ENCODE measurements at regions of chr4 and their contacts with region 1.

Region 1: DNA sequence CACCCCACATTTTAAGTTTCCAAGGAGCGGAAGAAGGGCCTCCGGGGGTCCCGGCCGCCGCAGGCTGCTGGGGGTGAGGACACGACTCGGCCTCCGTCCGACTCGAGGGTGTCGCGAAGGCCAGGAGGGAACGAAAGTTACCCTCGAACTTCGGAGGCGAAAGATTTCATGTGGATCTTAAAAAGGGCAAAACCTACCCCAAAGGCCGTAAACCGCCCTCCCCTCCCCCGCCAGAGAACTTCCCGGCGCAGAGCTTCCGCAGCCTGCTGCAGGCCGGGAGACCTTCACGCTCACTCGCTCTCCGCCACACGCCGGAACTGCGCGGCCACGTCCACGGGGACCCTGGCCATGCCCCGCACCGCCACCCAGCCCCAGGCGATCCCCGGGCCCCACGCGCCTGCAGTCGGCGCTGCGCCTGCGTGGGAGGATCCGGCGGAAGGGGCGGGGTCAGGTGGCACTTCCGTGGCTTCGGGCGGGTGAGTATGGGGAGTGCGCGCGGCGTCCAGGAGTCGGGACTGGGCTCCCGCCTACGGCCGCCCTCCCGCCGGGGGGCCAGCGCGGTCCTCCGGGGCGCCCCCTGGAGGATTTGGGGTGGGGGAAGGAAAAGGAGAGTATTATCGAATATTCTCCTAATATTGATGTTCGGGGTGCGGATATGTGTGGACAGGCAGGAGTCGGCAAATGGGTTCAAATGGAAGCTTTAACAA is at the start of gene MMAA:
- DNase-seq: peak; percentile 41
- H3K4me3 ChIP-seq: peak within 1 kb of the TSS; percentile 83
- CTCF ChIP-seq: peak; percentile 54

Region 2: DNA sequence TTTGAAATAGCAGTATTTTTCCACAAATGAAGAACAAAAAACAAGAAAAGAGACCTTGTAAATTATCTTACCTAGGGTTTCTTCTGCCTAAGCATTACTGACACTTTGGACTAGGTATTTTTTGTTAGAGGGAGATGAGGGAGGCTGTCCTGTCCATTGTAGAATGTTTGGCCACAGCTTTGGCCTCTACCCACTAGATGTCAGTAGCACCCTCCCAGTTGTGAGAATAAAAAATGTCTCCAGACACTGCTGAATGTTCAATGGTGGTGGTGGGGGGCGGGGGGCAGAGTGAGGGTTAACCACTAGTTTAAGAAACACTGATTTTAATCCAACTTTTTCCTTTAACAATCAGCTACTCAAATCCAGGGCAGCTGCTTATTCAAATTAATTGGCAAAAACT is 464.5 kb before region 1 on chr4:
- CTCF ChIA-PET with region 1: interaction called, 33 read pairs
- POLR2A ChIA-PET with region 1: no interaction called
- DNase-seq: no peak
- H3K4me3 ChIP-seq: no peak overlapping the region
- CTCF ChIP-seq: peak; percentile 59

Region 3: GRCh38 chr4:145179281-145179860 is 439.7 kb before region 1 on chr4:
- CTCF ChIA-PET with region 1: interaction called, 19 read pairs
- POLR2A ChIA-PET with region 1: no interaction called
- DNase-seq: no peak
- H3K4me3 ChIP-seq: peak overlapping the region; percentile 77
- CTCF ChIP-seq: no peak

Region 4: DNA sequence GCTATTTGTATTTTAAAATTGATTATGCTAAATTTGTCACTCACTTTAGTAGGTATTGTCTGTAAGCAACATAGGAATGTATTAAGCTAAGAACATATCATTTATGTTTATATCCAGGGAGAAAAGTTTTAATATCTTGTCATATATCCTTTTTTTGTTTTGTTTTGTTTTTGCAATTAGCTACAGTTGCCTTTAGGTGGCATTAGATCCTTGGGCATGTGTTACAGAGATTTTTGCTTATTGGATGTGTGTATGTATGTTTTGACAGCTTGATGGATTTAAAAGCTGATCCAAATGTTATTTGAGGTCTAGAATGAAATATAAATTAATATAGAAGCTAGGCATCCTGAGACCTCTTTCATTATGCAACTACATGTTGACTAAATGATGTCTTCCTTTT is 402.6 kb before region 1 on chr4:
- CTCF ChIA-PET with region 1: interaction called, 113 read pairs
- POLR2A ChIA-PET with region 1: no interaction called
- DNase-seq: no peak
- H3K4me3 ChIP-seq: no peak overlapping the region
- CTCF ChIP-seq: peak; percentile 33

Region 5: DNA sequence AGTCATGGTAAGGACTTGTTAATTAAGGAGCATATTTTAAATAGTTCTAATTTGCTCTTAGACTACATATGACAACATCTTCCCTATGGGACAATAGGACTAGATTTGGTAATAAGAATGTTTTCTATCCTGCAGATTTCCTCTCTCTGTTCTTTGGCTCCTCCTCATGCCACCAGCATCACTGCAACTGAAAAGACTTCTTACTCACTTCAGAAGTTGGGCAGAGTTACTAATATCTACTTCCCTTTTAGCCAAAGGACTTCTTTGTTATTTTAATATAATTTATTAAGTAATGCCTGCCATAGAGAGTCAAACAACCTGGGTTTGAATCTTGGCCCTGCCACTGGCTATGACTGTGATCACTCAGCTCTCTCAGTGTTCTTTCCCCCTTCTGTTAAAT is 16.5 kb after region 1 on chr4:
- CTCF ChIA-PET with region 1: interaction called, 12 read pairs
- POLR2A ChIA-PET with region 1: no interaction called
- DNase-seq: no peak
- H3K4me3 ChIP-seq: no peak overlapping the region
- CTCF ChIP-seq: no peak

Region 6: DNA sequence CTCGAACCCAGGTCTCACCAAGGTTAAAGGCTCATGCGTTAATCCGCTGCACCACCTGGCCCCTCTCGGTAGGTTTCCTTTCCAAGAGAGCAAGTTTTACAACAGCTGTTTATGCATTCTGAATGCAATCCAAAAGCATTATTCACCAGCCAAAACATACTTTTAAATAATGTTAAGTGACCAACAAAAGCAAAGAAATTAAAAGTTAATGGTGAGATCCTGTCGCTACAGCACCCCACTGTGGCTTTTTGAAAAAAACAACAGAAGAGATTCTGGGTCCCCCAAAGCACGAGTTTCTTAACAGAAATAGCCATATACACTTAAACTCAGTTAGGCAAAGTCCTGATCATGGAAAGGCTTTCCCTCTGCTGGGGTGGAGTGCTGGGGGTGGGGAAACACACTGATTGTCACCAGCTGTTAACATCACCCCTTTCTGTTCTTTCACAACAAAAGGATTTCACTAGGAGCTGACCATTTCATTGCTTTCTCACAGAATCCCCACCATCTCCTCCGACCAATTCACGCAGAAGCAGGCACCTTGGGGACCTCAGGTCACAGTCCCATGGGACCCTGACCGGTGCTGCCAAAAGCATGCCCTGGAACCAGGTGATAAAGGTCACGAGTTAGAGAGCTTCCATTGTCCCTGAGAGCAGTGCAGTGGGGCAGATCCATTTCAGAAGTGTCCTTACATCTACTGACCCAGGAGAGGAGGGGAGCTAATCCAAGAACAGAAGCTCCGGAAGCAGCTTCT is 268.3 kb after region 1 on chr4:
- CTCF ChIA-PET with region 1: interaction called, 10 read pairs
- POLR2A ChIA-PET with region 1: no interaction called
- DNase-seq: peak; percentile 28
- H3K4me3 ChIP-seq: no peak overlapping the region
- CTCF ChIP-seq: no peak